Left lung (tissue), 14 donors: ENCODE measurements at regions of chr20 and their contacts with region 1.

Region 1: GRCh38 chr20:49541733-49542513 is 26.0 kb downstream of the PTGIS start:
- DNase-seq: peak in 3 of 4 donors; percentile 33 to 70 (median 53)
- ATAC-seq: peak; percentile 86
- H3K4me3 ChIP-seq: no peak overlapping the region
- H3K27ac ChIP-seq: no peak overlapping the region
- H3K4me1 ChIP-seq: no peaks in the 10 kb centered on the region
- H3K27me3 ChIP-seq: no peaks in the 10 kb centered on the region
- CTCF ChIP-seq: peak; percentile 58 to 75

Region 2: GRCh38 chr20:49610701-49611538 is 69.0 kb after region 1 on chr20:
- intact Hi-C with region 1: loop called (anchors 2 to 5 kb)
- DNase-seq: peak in 3 of 4 donors; percentile 73 to 97 (median 78)
- ATAC-seq: peak; percentile 96
- H3K4me3 ChIP-seq: peak overlapping the region; percentile 5 to 16
- H3K27ac ChIP-seq: no peak overlapping the region
- H3K4me1 ChIP-seq: peaks cover 3 to 32% of the 10 kb centered on the region in 2 donors
- H3K27me3 ChIP-seq: peaks cover 0 to 9% of the 10 kb centered on the region in 2 donors
- CTCF ChIP-seq: peak; percentile 100